ENCODE measurements at regions of chr4 and their contacts with region 1.

Region 1: DNA sequence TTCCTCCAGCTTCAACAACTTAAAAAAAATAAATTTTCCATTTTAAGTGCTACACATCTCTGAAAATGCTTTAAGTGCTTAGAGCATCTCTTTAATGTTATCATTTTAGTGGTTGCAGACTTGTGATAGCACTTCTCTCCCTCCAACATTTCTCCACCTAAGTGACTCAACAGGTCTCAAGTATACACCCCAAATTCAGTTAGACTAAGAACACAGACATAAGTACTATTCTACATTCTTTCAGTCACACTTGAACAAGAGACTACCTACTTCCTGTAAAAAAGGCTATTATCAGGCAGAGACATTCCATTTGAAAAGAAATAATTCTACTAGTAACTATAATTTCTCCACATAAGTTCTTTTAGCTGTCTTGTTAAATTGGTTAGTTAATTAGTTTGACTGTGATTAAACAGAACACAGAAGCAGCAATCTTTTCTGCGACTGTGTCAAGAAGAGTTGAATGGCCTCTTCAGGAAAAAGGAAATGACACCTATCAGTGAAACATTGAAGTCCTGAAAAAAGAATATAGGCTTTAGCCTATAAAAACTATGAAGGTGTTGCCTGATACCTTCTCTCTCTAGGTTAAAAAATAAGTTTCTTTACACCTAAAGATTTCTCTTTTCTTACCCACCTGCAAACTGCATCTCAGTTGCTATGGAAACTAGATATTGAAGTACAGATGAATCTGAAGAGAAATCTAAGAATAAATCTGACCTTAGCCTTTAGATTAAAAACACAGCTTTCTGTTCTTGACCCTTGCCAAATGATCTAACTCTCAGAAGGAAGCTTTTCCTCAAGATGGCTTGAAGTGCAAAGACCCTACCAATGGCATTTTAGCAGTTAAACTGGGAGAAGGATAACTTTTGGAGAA is 18.0 kb downstream of the NAF1 start:
- DNase-seq: no peak
- H3K4me3 ChIP-seq: no peak overlapping the region
- H3K27ac ChIP-seq: no peak overlapping the region
- H3K4me1 ChIP-seq: no peaks in the 10 kb centered on the region
- H3K27me3 ChIP-seq: no peaks in the 10 kb centered on the region
- CTCF ChIP-seq: no peak
- POLR2A ChIP-seq: no peak

Region 2: GRCh38 chr4:163309466-163309865 is 160.8 kb after region 1 on chr4:
- intact Hi-C with region 1: loop called (anchors 10 kb)
- DNase-seq: no peak
- H3K4me3 ChIP-seq: no peak overlapping the region
- H3K27ac ChIP-seq: no peak overlapping the region
- H3K4me1 ChIP-seq: no peaks in the 10 kb centered on the region
- H3K27me3 ChIP-seq: no peaks in the 10 kb centered on the region
- CTCF ChIP-seq: no peak
- POLR2A ChIP-seq: no peak

Region 3: GRCh38 chr4:163462546-163462945 is 313.8 kb after region 1 on chr4:
- intact Hi-C with region 1: no loop called
- DNase-seq: no peak
- H3K4me3 ChIP-seq: no peak overlapping the region
- H3K27ac ChIP-seq: no peak overlapping the region
- H3K4me1 ChIP-seq: no peaks in the 10 kb centered on the region
- H3K27me3 ChIP-seq: no peaks in the 10 kb centered on the region
- CTCF ChIP-seq: no peak
- POLR2A ChIP-seq: no peak

Measured in vagina (tissue), 2 donors.